Tibial artery (tissue), 4 donors: ENCODE measurements at regions of chr6 and their contacts with region 1.

Region 1: DNA sequence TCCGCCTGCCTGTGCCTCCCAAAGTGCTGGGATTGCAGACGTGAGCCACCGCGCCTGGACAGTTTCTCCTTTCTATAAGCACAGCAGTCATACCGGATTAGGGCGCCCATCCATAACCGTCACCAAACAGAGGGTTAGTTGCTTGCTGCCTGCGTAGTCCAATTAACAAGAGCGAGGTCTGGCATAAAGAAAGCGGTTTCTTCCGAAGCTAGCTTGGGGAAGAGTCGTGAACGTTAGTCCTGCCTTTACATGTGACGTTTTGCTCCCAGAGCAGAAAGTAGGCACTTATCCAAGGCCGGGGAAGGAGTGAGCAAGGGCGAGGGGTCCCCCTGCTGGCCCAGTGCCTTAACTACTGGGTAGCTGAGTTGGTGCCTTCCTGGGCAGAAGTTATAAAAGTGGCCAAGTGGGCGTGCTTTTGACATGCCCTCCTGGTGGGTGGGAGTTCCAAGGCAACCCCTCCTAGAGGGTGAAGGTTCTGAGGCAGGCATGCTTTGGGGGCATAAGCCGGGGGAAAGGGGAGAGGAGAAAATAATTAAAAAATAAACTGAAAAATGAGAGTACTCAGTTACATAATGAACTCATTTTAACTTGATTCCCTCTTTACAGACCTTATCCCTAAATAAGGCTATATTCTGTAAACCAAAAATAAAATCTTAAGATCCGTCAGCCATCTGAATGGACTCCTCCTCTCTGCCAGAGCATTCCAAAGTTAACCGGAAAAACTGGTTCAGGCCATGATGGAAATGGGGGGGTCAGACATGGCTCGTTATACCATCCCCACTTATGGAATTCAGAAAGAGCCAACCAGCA is 88.0 kb downstream of the FAM217A start:
- DNase-seq: peak; percentile 89 to 94
- H3K4me3 ChIP-seq: peak overlapping the region; percentile 54 to 57
- H3K27ac ChIP-seq: peak overlapping the region; percentile 81 to 82
- H3K4me1 ChIP-seq: peaks cover 0 to 29% (median 16%) of the 10 kb centered on the region in 4 donors
- H3K27me3 ChIP-seq: no peaks in the 10 kb centered on the region
- CTCF ChIP-seq: peak; percentile 81 to 84

Region 2: DNA sequence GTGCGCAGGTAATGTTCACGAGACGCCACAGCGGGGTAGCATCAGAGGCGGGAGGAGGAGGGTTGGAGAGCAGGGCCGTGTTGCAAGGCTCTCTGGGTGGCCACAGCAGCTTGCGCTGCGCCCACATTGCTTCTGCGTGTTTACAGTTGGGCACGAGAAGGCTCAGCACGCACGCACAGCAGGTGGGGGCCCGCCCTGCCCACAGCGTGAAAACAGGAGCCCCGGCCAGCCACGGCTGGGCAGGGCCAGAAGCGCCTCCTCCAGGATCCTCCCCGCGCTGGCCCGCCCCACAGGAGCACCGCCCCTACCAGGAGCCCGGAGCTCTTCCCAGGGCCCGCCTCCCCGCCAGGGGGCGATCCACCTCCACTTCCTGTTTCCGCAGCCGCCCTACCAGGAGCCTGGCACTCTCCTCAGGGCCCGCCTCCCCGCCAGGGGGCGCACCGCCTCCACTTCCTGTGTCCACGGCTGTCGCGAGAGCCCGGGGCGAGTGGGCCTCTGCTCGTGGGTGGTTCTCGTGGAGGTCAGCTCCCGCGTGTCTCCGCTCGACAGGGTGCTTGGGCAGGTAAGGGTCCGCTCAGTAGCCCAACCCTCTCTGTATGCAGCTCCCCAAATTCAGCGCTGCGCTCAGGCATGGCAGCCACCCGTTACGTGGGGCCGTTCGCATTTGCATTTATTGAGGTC is 141.8 kb before region 1 on chr6 and contains the start of gene FAM50B:
- intact Hi-C with region 1: loop called (anchors 10 kb)
- DNase-seq: peak; percentile 91 to 97
- H3K4me3 ChIP-seq: peak within 1 kb of the TSS; percentile 53 to 55
- H3K27ac ChIP-seq: peak within 1 kb of the TSS; percentile 75
- H3K4me1 ChIP-seq: peaks cover 0 to 46% (median 12%) of the 10 kb centered on the region in 4 donors
- H3K27me3 ChIP-seq: no peaks in the 10 kb centered on the region
- CTCF ChIP-seq: peak; percentile 84 to 99